Caco-2 (cell line): ENCODE measurements at regions of chr6 and their contacts with region 1.

Region 1: DNA sequence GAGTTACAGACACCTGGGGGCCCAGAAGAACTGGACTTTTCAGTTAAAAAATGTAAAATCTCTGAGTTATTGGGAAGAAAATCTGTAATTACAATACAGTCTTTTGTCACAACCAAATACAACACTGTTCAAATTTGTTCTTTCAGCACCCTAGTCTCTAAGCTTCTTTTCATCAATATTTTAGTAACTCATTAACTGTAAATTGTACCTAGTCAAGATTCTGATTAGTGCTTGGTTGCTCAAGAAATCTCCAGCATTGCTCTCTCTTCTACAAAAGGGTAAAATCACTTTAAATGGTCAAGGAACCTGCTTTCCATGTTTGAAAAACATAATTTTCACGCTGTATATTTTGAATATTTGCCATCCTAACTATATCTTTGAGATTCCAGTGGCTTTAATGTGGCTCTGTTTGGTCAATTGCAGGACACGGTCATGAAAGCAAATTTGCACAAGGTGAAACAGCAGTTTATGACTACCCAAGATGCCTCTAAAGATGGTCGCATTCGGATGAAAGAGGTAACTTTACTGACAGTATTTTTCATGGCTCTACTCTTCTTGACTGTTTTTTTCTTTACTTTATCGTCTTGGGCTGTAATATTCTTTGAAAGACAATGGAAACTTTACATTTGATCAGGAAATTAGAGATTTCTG is 9.2 kb downstream of the SCGN start:
- DNase-seq: no peak
- H3K4me3 ChIP-seq: peak overlapping the region; percentile 12; the same call in 1 of the 2 replicates
- H3K4me3 Mint-ChIP-seq: peak overlapping the region; percentile 52
- H3K27ac Mint-ChIP-seq: no peak overlapping the region
- H3K4me1 ChIP-seq: peaks cover 5% of the 10 kb centered on the region; the same call in 1 of the 2 replicates
- H3K4me1 Mint-ChIP-seq: no peaks in the 10 kb centered on the region
- H3K27me3 ChIP-seq: no peaks in the 10 kb centered on the region
- H3K27me3 Mint-ChIP-seq: no peaks in the 10 kb centered on the region
- CTCF ChIP-seq: no peak

Region 2: GRCh38 chr6:24935366-24936152 is 725.7 kb before region 1 on chr6 and contains the start of gene RIPOR2:
- CTCF ChIA-PET with region 1: no interaction called
- POLR2A ChIA-PET with region 1: no interaction called
- intact Hi-C with region 1: no loop called
- DNase-seq: no peak
- H3K4me3 ChIP-seq: no peak within 1 kb of the TSS
- H3K4me3 Mint-ChIP-seq: no peak within 1 kb of the TSS
- H3K27ac Mint-ChIP-seq: no peak within 1 kb of the TSS
- H3K4me1 ChIP-seq: peaks cover 14% of the 10 kb centered on the region
- H3K4me1 Mint-ChIP-seq: no peaks in the 10 kb centered on the region
- H3K27me3 ChIP-seq: no peaks in the 10 kb centered on the region
- H3K27me3 Mint-ChIP-seq: no peaks in the 10 kb centered on the region
- CTCF ChIP-seq: no peak
- total RNA-seq, gene RIPOR2: 0.64 and 0.86 TPM in 2 replicates

Region 3: GRCh38 chr6:25431306-25431974 is 229.8 kb before region 1 on chr6:
- CTCF ChIA-PET with region 1: no interaction called
- POLR2A ChIA-PET with region 1: no interaction called
- intact Hi-C with region 1: no loop called
- DNase-seq: no peak
- H3K4me3 ChIP-seq: no peak overlapping the region
- H3K4me3 Mint-ChIP-seq: no peak overlapping the region
- H3K27ac Mint-ChIP-seq: no peak overlapping the region
- H3K4me1 ChIP-seq: no peaks in the 10 kb centered on the region
- H3K4me1 Mint-ChIP-seq: no peaks in the 10 kb centered on the region
- H3K27me3 ChIP-seq: no peaks in the 10 kb centered on the region
- H3K27me3 Mint-ChIP-seq: no peaks in the 10 kb centered on the region
- CTCF ChIP-seq: no peak

Region 4: DNA sequence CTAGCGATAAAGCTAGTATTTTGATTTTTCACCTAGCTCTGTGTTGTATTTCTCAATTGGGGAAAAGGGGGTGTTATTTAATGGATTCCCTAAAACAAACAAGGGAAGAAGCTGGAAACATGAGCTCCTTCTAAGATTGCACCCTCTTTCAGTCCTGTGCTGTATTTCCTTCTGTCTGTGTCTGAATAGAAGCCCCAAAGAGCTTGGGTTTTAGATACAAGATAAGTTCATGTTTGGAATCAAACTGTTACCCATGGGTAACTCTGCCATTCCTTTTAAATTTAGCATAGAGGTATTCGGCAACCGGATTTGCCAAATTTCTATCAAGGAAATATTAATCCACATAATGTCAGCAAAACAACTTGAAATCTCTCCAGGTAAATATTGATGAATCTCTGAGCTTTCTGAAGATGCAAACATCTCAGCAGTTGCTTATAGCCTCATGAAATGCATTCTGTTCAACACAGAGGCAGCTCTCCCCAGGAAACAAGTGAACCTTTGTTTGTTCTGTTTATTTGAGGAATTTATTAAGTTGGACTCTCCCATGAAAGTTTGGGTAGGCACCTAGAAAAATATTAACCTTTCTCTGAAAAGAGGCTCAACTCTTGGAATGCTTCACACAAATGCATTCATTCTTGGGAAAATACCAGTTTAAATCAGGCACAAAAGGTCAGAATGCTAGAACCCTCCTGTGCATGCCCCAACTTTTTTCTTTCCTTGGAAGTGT is 19.2 kb before region 1 on chr6:
- CTCF ChIA-PET with region 1: no interaction called
- POLR2A ChIA-PET with region 1: no interaction called
- intact Hi-C with region 1: loop called (anchors 1 kb)
- DNase-seq: peak in 1 of 2 experiments; percentile 38
- H3K4me3 ChIP-seq: no peak overlapping the region
- H3K4me3 Mint-ChIP-seq: peak overlapping the region; percentile 62
- H3K27ac Mint-ChIP-seq: peak overlapping the region; percentile 91
- H3K4me1 ChIP-seq: peaks cover 50% of the 10 kb centered on the region
- H3K4me1 Mint-ChIP-seq: peaks cover 52% of the 10 kb centered on the region
- H3K27me3 ChIP-seq: no peaks in the 10 kb centered on the region
- H3K27me3 Mint-ChIP-seq: no peaks in the 10 kb centered on the region
- CTCF ChIP-seq: no peak